ENCODE measurements at regions of chr1 and their contacts with region 1.

Region 1: DNA sequence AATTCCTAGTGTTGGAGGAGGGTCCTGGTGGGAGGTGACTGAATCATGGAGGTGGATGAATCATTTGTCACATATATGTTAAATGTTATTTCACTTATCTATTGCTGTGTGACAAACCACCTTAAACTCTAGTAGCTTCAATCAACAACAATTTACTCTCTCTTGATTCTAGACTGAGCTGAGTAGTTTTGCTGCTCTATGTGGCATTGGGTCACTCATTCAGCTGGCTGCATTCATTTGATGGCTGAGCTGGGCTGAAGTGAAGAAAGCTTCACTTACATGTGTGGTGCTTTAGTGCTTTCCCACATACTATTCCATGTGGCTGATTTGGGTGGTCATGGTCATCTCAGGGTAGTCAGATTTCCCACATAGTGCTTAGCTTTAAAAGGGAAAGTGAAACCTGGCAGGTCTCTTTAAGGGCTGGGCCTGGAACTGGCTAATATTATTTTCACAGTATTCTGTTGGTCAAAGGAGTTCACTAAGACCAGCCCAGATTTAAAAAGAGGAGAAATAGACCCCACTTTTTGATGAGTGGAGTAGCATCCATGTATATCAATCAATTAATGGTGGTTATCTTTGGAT is 10.5 kb downstream of the DNAH14 start:
- DNase-seq: no peak
- ATAC-seq: no peak
- H3K4me3 ChIP-seq: no peak overlapping the region
- H3K27ac ChIP-seq: no peak overlapping the region
- H3K4me1 ChIP-seq: no peaks in the 10 kb centered on the region
- H3K27me3 ChIP-seq: no peaks in the 10 kb centered on the region
- CTCF ChIP-seq: no peak

Region 2: GRCh38 chr1:224873434-224874369 is 66.2 kb before region 1 on chr1:
- intact Hi-C with region 1: no loop called
- DNase-seq: no peak
- ATAC-seq: no peak
- H3K4me3 ChIP-seq: no peak overlapping the region
- H3K27ac ChIP-seq: no peak overlapping the region
- H3K4me1 ChIP-seq: no peaks in the 10 kb centered on the region
- H3K27me3 ChIP-seq: peaks cover 0 to 45% (median 22%) of the 10 kb centered on the region in 7 donors
- CTCF ChIP-seq: no peak

Region 3: DNA sequence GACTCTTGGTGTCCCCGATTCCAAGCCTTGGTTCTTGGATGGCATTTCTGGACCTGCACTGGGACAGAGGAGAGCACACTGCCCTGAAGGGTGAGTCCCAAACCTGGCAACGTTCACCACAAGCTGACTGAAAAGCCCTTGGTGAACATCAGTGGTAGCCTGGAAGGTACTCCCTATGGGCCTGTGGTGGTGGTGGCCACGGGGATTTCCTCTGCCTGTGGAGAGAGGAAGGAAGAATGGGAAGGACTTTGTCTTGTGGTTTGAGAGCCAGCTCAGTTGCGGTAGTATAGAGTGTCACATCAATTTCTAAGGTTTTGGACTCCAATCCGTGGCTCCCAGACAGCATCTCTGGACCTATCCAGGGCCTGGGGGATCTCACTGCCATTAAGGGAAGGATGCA is 40.2 kb after region 1 on chr1:
- intact Hi-C with region 1: no loop called
- DNase-seq: no peak
- ATAC-seq: no peak
- H3K4me3 ChIP-seq: no peak overlapping the region
- H3K27ac ChIP-seq: no peak overlapping the region
- H3K4me1 ChIP-seq: no peaks in the 10 kb centered on the region
- H3K27me3 ChIP-seq: no peaks in the 10 kb centered on the region
- CTCF ChIP-seq: no peak

Region 4: GRCh38 chr1:225026701-225027100 is 86.8 kb after region 1 on chr1:
- intact Hi-C with region 1: no loop called
- DNase-seq: no peak
- ATAC-seq: no peak
- H3K4me3 ChIP-seq: no peak overlapping the region
- H3K27ac ChIP-seq: no peak overlapping the region
- H3K4me1 ChIP-seq: no peaks in the 10 kb centered on the region
- H3K27me3 ChIP-seq: no peaks in the 10 kb centered on the region
- CTCF ChIP-seq: no peak

Region 5: DNA sequence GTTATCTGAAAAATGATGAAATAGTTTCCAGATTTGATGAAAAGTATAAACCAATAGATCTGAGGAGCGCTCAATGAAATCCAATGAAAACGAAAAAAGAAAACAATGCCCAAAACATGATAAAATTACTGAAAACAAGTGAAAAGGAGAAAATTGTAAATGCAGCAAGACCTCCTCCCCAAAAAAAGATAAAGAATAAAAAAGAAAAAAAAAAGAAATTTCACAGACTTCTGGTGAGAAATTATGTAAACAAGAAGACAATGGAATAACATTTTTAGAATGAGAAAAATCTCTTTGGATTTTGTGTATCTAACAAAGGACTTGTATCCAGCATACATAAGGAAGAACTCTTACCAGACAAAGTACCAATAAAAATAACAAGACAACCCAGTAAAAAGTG is 123.8 kb after region 1 on chr1:
- intact Hi-C with region 1: loop called in 1 of 10 experiments (anchors 5 kb)
- DNase-seq: no peak
- ATAC-seq: no peak
- H3K4me3 ChIP-seq: no peak overlapping the region
- H3K27ac ChIP-seq: no peak overlapping the region
- H3K4me1 ChIP-seq: no peaks in the 10 kb centered on the region
- H3K27me3 ChIP-seq: no peaks in the 10 kb centered on the region
- CTCF ChIP-seq: no peak

Measured in heart right ventricle (tissue), 16 donors.